T-cell (primary cell): ENCODE measurements at regions of chr14 and their contacts with region 1.

Region 1: DNA sequence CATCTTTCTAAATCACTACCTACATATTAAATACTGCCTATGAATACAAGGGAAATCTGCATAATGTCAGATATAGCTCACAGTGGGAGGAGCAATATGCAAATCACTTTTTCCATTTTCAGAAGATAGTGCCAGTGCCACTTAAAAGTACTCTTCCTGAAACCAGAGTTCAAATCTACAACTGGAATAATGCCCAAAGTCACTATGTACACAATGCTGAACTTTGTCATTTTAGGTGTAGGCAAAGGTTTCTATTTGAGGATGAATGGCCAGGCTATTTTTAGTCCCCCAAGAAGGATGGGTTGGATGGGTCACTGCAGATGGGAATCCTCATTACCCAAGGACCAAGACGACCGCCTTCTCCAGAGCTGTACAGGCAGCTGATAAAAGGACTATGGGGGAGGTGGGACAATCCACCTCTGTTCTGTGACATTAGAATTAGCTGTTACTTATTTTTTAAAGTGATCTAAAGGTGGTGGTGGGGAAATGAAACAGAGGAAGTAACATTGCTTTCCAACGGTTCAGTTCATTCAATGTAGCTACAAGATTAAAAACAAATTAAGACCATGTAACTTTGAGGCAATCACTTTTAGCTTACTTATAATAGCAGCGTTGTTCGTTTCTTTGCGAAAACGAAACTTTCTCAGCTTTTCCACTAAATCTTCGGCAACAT is 5.6 kb downstream of the GMFB start:
- DNase-seq: no peak
- ATAC-seq: no peak
- H3K4me3 ChIP-seq: no peak overlapping the region
- H3K4me3 Mint-ChIP-seq: peak overlapping the region in 1 of 3 donors; percentile 5
- H3K27ac ChIP-seq: no peak overlapping the region
- H3K27ac Mint-ChIP-seq: peak overlapping the region; percentile 4 to 23
- H3K4me1 ChIP-seq: peaks cover 8 to 15% of the 10 kb centered on the region in 2 experiments
- H3K4me1 Mint-ChIP-seq: peaks cover 52 to 58% (median 55%) of the 10 kb centered on the region in 3 donors
- H3K27me3 ChIP-seq: no peaks in the 10 kb centered on the region
- H3K27me3 Mint-ChIP-seq: no peaks in the 10 kb centered on the region

Region 2: GRCh38 chr14:54253195-54253947 is 229.8 kb before region 1 on chr14:
- CTCF ChIA-PET with region 1: no interaction called
- POLR2A ChIA-PET with region 1: no interaction called
- DNase-seq: no peak
- ATAC-seq: no peak
- H3K4me3 ChIP-seq: no peak overlapping the region
- H3K4me3 Mint-ChIP-seq: no peak overlapping the region
- H3K27ac ChIP-seq: no peak overlapping the region
- H3K27ac Mint-ChIP-seq: no peak overlapping the region
- H3K4me1 ChIP-seq: no peaks in the 10 kb centered on the region
- H3K4me1 Mint-ChIP-seq: no peaks in the 10 kb centered on the region
- H3K27me3 ChIP-seq: peaks cover 0 to 3% of the 10 kb centered on the region in 2 experiments
- H3K27me3 Mint-ChIP-seq: peaks cover 12 to 22% of the 10 kb centered on the region in 2 donors

Region 3: DNA sequence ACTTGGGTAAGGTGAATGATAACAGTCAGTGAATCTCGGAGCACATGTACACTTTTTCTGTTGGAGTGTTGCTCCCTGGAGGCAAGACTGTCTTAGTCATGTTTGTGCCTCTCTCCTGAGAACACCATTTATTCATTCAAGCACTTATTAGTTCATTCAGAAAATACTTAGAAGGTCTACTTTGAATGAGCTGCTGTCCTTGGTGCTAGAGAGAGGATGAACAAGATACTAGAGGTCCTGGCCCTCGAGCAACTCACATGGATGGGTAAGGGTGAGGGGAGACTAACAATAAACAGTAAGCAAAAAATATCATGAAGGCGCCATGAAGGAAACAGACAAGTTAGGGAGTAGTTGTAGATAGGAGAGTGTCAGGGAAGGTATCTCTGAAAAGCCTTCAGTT is 66.7 kb after region 1 on chr14:
- CTCF ChIA-PET with region 1: no interaction called
- POLR2A ChIA-PET with region 1: no interaction called
- DNase-seq: no peak
- ATAC-seq: no peak
- H3K4me3 ChIP-seq: no peak overlapping the region
- H3K4me3 Mint-ChIP-seq: no peak overlapping the region
- H3K27ac ChIP-seq: no peak overlapping the region
- H3K27ac Mint-ChIP-seq: no peak overlapping the region
- H3K4me1 ChIP-seq: no peaks in the 10 kb centered on the region
- H3K4me1 Mint-ChIP-seq: no peaks in the 10 kb centered on the region
- H3K27me3 ChIP-seq: no peaks in the 10 kb centered on the region
- H3K27me3 Mint-ChIP-seq: peaks cover 4 to 5% of the 10 kb centered on the region in 2 donors

Region 4: GRCh38 chr14:54691525-54692283 is 208.5 kb after region 1 on chr14:
- CTCF ChIA-PET with region 1: interaction called in 1 of 2 experiments, 13 read pairs
- POLR2A ChIA-PET with region 1: no interaction called
- DNase-seq: peak in 29 of 35 experiments; percentile 5 to 68 (median 27)
- ATAC-seq: peak; percentile 60 to 66 (median 63)
- H3K4me3 ChIP-seq: no peak overlapping the region
- H3K4me3 Mint-ChIP-seq: no peak overlapping the region
- H3K27ac ChIP-seq: no peak overlapping the region
- H3K27ac Mint-ChIP-seq: no peak overlapping the region
- H3K4me1 ChIP-seq: no peaks in the 10 kb centered on the region
- H3K4me1 Mint-ChIP-seq: no peaks in the 10 kb centered on the region
- H3K27me3 ChIP-seq: peaks cover 0 to 16% of the 10 kb centered on the region in 2 experiments
- H3K27me3 Mint-ChIP-seq: peaks cover 16 to 22% of the 10 kb centered on the region in 2 donors